ENCODE measurements at regions of chr17 and their contacts with region 1.

Region 1: DNA sequence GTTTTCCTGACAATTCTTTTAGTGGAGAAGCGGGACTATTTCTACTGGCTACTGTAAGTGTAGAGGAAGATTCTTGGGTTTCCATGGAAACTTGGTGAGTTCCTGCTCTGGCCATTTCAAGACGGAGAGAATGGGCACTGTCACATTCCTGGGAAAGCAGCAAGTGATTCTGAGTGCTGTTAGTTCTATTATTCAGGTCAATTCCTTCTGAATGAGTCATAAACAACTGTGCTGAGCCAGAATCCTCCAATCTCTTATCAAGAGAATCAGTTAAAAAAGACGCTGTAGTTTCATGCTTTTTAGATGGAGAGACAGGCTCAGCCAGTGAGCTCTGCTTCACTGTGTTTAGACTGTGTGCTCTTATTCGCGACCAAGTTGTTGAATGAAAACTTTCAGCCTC is 19.6 kb downstream of the AKAP10 start:
- DNase-seq: peak; percentile 91
- H3K4me3 ChIP-seq: peak overlapping the region in 1 of 3 experiments; percentile 37
- H3K27ac ChIP-seq: peak overlapping the region; percentile 86
- H3K4me1 ChIP-seq: peaks cover 37% of the 10 kb centered on the region
- H3K27me3 ChIP-seq: no peaks in the 10 kb centered on the region
- CTCF ChIP-seq: no peak
- POLR2A ChIP-seq: no peak

Region 2: DNA sequence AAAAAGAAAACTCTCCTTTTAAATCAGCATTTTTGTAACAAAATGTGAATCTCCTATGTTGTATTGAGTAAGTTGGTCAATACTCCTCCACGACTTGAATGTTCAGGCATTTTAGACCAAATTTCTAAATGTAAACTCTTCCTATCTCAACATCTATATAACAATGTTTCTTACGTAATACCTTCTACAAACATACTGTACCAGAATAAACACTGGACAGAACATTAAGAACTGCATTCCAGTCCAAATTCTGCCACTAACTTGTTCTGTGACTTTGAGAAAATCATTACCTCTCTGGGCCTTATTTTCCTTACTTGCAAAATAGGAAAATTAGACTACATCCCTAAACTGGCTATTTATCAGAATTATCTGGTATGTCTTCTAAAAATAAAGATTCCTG is 20.5 kb before region 1 on chr17:
- CTCF ChIA-PET with region 1: no interaction called
- POLR2A ChIA-PET with region 1: no interaction called
- dilution Hi-C with region 1: no loop called
- intact Hi-C with region 1: no loop called
- DNase-seq: no peak
- H3K4me3 ChIP-seq: no peak overlapping the region
- H3K27ac ChIP-seq: no peak overlapping the region
- H3K4me1 ChIP-seq: no peaks in the 10 kb centered on the region
- H3K27me3 ChIP-seq: no peaks in the 10 kb centered on the region
- CTCF ChIP-seq: no peak
- POLR2A ChIP-seq: no peak

Region 3: GRCh38 chr17:19977311-19978208 is 19.5 kb after region 1 on chr17 and contains the start of gene AKAP10:
- CTCF ChIA-PET with region 1: no interaction called
- POLR2A ChIA-PET with region 1: no interaction called
- dilution Hi-C with region 1: no loop called
- intact Hi-C with region 1: loop called (anchors 2 kb)
- DNase-seq: peak; percentile 79
- H3K4me3 ChIP-seq: peak within 1 kb of the TSS; percentile 58 to 95 (median 82)
- H3K27ac ChIP-seq: peak within 1 kb of the TSS; percentile 70
- H3K4me1 ChIP-seq: peaks cover 7% of the 10 kb centered on the region
- H3K27me3 ChIP-seq: no peaks in the 10 kb centered on the region
- CTCF ChIP-seq: no peak
- POLR2A ChIP-seq: peak; percentile 84
- total RNA-seq, gene AKAP10: 25.3 and 27.1 TPM in 2 replicates

Region 4: GRCh38 chr17:20063665-20064648 is 105.9 kb after region 1 on chr17:
- CTCF ChIA-PET with region 1: no interaction called
- POLR2A ChIA-PET with region 1: no interaction called
- dilution Hi-C with region 1: no loop called
- intact Hi-C with region 1: no loop called
- DNase-seq: no peak
- H3K4me3 ChIP-seq: no peak overlapping the region
- H3K27ac ChIP-seq: no peak overlapping the region
- H3K4me1 ChIP-seq: no peaks in the 10 kb centered on the region
- H3K27me3 ChIP-seq: no peaks in the 10 kb centered on the region
- CTCF ChIP-seq: no peak
- POLR2A ChIP-seq: no peak

Measured in endothelial cell of umbilical vein (primary cell).